ENCODE measurements at regions of chr3 and their contacts with region 1.

Region 1: GRCh38 chr3:43621656-43622432 is at the start of gene ANO10:
- DNase-seq: peak; percentile 99
- H3K4me3 ChIP-seq: peak within 1 kb of the TSS; percentile 92 to 95 (median 93)
- H3K27ac ChIP-seq: peak within 1 kb of the TSS; percentile 73
- H3K4me1 ChIP-seq: peaks cover 11% of the 10 kb centered on the region
- H3K27me3 ChIP-seq: no peaks in the 10 kb centered on the region
- CTCF ChIP-seq: no peak
- total RNA-seq, gene ANO10: 41.3 to 43.6 TPM

Region 2: DNA sequence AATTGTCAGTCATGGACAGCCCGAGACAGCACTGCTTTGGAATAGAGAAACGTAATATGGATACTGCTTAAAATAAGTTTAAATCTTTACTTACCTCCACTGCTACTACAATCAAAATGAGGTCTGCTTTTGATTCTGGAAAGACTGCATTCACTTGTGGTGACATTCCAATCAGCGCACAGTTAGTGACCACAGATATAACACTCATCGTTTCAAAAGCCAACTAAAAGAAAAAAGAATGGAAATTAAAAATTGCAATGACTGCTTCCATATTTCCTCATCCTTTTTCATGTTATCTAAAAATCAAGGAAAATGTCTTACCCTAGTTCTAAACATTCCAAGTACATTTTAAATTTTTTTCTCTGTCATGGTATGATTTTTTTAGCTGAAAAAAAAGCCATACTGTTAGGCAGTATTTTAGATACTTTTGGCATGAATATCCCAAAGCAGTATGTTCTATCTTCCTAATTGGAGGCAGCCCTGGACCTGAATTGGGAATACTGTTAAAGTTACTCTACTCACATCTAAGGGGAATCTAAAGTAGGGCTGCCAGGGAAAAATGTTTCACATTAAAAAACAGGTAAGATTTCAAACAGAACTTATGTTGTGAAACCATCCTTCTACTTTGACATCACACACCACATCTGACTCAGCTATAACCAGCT is 72.1 kb before region 1 on chr3:
- CTCF ChIA-PET with region 1: no interaction called
- dilution Hi-C with region 1: no loop called
- in situ Hi-C with region 1: no loop called
- intact Hi-C with region 1: no loop called
- DNase-seq: no peak
- H3K4me3 ChIP-seq: no peak overlapping the region
- H3K27ac ChIP-seq: no peak overlapping the region
- H3K4me1 ChIP-seq: no peaks in the 10 kb centered on the region
- H3K27me3 ChIP-seq: no peaks in the 10 kb centered on the region
- CTCF ChIP-seq: no peak

Region 3: GRCh38 chr3:43581343-43581742 is 40.5 kb before region 1 on chr3:
- CTCF ChIA-PET with region 1: no interaction called
- dilution Hi-C with region 1: no loop called
- in situ Hi-C with region 1: no loop called
- intact Hi-C with region 1: loop called (anchors 1 kb)
- DNase-seq: peak; percentile 8
- H3K4me3 ChIP-seq: no peak overlapping the region
- H3K27ac ChIP-seq: no peak overlapping the region
- H3K4me1 ChIP-seq: peaks cover 8% of the 10 kb centered on the region
- H3K27me3 ChIP-seq: no peaks in the 10 kb centered on the region
- CTCF ChIP-seq: no peak

Region 4: DNA sequence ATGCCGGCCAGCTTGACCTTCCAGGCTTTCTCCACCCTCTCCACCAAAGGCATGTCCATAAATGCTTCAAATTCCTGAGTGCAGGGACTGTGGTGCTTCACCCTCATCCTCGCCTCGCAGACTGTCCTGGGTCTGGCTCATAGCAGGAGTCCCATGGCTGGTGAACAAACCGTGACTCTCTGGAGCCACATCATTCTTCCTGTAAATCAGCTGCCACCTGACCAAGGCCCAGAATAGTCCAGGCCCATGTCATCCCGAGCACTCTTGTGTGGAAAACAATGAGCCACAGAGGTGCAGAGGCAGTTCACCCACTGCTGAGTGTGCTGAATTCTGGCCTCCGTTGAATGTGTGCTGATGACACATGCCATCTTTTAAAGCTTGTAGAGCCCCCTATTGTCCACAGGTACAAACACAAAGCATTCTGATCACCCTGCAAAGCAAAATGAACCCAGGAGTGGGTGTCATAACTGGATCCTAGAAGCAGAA is 137.5 kb after region 1 on chr3:
- CTCF ChIA-PET with region 1: no interaction called
- dilution Hi-C with region 1: no loop called
- in situ Hi-C with region 1: no loop called
- intact Hi-C with region 1: loop called (anchors 5 kb)
- DNase-seq: peak; percentile 67
- H3K4me3 ChIP-seq: no peak overlapping the region
- H3K27ac ChIP-seq: no peak overlapping the region
- H3K4me1 ChIP-seq: peaks cover 26% of the 10 kb centered on the region
- H3K27me3 ChIP-seq: no peaks in the 10 kb centered on the region
- CTCF ChIP-seq: peak; percentile 26 to 44

Region 5: DNA sequence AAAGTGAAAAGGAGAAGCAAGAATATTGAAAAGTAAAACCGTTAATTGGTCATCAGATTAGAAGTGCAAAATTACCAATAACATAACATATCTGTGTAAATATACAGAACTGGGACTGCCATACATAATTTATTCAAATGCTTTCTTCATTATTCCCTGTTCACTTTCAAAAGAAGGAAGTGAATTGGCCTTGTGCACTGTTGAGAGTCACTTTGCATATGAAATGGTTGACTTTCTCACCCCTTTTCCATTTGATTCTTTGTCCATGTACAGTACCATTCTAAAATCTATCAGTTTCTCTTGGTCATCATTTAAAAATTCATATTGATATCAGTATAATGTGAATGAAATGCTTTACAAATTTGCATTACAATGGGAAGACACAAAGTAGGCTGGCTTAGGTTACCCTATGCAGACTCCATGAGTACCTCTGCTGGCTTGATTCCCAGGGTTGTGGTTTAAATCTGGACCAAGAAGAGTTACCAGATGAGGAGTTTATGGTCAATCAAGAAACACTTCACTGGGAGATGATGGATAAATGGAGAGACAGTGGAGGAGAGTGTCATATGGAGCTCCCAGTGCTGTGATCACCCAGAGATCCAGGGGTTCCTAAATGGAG is 409.0 kb after region 1 on chr3:
- CTCF ChIA-PET with region 1: no interaction called
- dilution Hi-C with region 1: no loop called
- in situ Hi-C with region 1: no loop called
- intact Hi-C with region 1: no loop called
- DNase-seq: no peak
- H3K4me3 ChIP-seq: no peak overlapping the region
- H3K27ac ChIP-seq: no peak overlapping the region
- H3K4me1 ChIP-seq: peaks cover 6% of the 10 kb centered on the region
- H3K27me3 ChIP-seq: no peaks in the 10 kb centered on the region
- CTCF ChIP-seq: no peak